ENCODE measurements at regions of chr1 and their contacts with region 1.

Region 1: GRCh38 chr1:19179597-19180264 is 30.3 kb downstream of the UBR4 start:
- DNase-seq: peak; percentile 62
- H3K4me3 Mint-ChIP-seq: no peak overlapping the region
- H3K27ac Mint-ChIP-seq: peak overlapping the region; percentile 92
- H3K4me1 Mint-ChIP-seq: peaks cover 31% of the 10 kb centered on the region
- H3K27me3 Mint-ChIP-seq: no peaks in the 10 kb centered on the region

Region 2: GRCh38 chr1:19240673-19241538 is 61.2 kb after region 1 on chr1:
- CTCF ChIA-PET with region 1: interaction called, 17 read pairs
- DNase-seq: peak; percentile 80
- H3K4me3 Mint-ChIP-seq: no peak overlapping the region
- H3K27ac Mint-ChIP-seq: no peak overlapping the region
- H3K4me1 Mint-ChIP-seq: no peaks in the 10 kb centered on the region
- H3K27me3 Mint-ChIP-seq: no peaks in the 10 kb centered on the region